Activated naive CD4-positive, alpha-beta T cell treated with anti-CD3 and anti-CD28 coated beads, Interleukin-2, amount 10 ng/mL, durations not matched to agents 7 days and 5 days (primary cell): ENCODE measurements at regions of chr19 and their contacts with region 1.

Region 1: GRCh38 chr19:3146677-3147100 is 10.9 kb downstream of the GNA15 start:
- DNase-seq: peak; percentile 75
- H3K4me3 Mint-ChIP-seq: no peak overlapping the region
- H3K27ac Mint-ChIP-seq: no peak overlapping the region
- H3K4me1 Mint-ChIP-seq: peaks cover 37% of the 10 kb centered on the region
- H3K27me3 Mint-ChIP-seq: peaks cover 6% of the 10 kb centered on the region

Region 2: GRCh38 chr19:3125900-3126524 is 20.7 kb before region 1 on chr19:
- CTCF ChIA-PET with region 1: interaction called, 38 read pairs
- DNase-seq: peak; percentile 76
- H3K4me3 Mint-ChIP-seq: no peak overlapping the region
- H3K27ac Mint-ChIP-seq: no peak overlapping the region
- H3K4me1 Mint-ChIP-seq: peaks cover 13% of the 10 kb centered on the region
- H3K27me3 Mint-ChIP-seq: peaks cover 23% of the 10 kb centered on the region

Region 3: DNA sequence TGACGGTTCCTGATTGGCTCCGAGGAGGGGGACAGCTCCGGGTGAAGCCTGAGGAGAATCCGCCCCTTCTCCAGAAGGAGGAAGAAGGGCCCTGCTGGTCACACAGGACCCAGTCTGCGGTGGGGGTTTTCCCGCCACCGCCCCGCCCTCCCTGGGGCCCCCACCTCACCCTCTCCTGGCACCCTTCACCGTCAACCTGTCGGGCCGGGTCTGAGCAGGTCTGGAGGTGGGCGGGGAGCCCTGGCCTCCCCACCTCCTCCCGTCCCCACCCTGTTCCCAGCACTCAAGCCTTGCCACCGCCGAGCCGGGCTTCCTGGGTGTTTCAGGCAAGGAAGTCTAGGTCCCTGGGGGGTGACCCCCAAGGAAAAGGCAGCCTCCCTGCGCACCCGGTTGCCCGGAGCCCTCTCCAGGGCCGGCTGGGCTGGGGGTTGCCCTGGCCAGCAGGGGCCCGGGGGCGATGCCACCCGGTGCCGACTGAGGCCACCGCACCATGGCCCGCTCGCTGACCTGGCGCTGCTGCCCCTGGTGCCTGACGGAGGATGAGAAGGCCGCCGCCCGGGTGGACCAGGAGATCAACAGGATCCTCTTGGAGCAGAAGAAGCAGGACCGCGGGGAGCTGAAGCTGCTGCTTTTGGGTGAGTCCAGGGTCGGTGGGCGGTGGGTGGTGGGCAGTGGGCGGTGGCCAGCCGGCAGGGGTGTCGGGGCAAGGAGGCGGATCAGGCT is 10.6 kb before region 1 on chr19 and contains the start of gene GNA15:
- CTCF ChIA-PET with region 1: interaction called, 23 read pairs
- DNase-seq: peak; percentile 66
- H3K4me3 Mint-ChIP-seq: peak within 1 kb of the TSS; percentile 76
- H3K27ac Mint-ChIP-seq: peak within 1 kb of the TSS; percentile 33
- H3K4me1 Mint-ChIP-seq: peaks cover 56% of the 10 kb centered on the region
- H3K27me3 Mint-ChIP-seq: peaks cover 15% of the 10 kb centered on the region

Region 4: GRCh38 chr19:3163230-3163886 is 16.7 kb after region 1 on chr19:
- CTCF ChIA-PET with region 1: interaction called, 10 read pairs
- DNase-seq: peak; percentile 81
- H3K4me3 Mint-ChIP-seq: no peak overlapping the region
- H3K27ac Mint-ChIP-seq: peak overlapping the region; percentile 61
- H3K4me1 Mint-ChIP-seq: peaks cover 51% of the 10 kb centered on the region
- H3K27me3 Mint-ChIP-seq: peaks cover 6% of the 10 kb centered on the region

Region 5: GRCh38 chr19:3250675-3251074 is 104.0 kb after region 1 on chr19:
- CTCF ChIA-PET with region 1: no interaction called
- DNase-seq: peak; percentile 55
- H3K4me3 Mint-ChIP-seq: no peak overlapping the region
- H3K27ac Mint-ChIP-seq: no peak overlapping the region
- H3K4me1 Mint-ChIP-seq: no peaks in the 10 kb centered on the region
- H3K27me3 Mint-ChIP-seq: peaks cover 18% of the 10 kb centered on the region